HepG2 (cell line): ENCODE measurements at regions of chr5 and their contacts with region 1.

Region 1: GRCh38 chr5:132746954-132747615 is at the start of gene CCNI2:
- DNase-seq: no peak
- ATAC-seq: no peak
- H3K4me3 ChIP-seq: no peak within 1 kb of the TSS
- H3K27ac ChIP-seq: no peak within 1 kb of the TSS
- H3K4me1 ChIP-seq: no peaks in the 10 kb centered on the region; the same call in 1 of the 2 replicates
- H3K27me3 ChIP-seq: no peaks in the 10 kb centered on the region
- CTCF ChIP-seq: peak; percentile 38
- EP300 ChIP-seq: no peak
- POLR2A ChIP-seq: no peak
- RAD21 ChIP-seq: no peak
- total RNA-seq, gene CCNI2: not detected in 2 replicates

Region 2: DNA sequence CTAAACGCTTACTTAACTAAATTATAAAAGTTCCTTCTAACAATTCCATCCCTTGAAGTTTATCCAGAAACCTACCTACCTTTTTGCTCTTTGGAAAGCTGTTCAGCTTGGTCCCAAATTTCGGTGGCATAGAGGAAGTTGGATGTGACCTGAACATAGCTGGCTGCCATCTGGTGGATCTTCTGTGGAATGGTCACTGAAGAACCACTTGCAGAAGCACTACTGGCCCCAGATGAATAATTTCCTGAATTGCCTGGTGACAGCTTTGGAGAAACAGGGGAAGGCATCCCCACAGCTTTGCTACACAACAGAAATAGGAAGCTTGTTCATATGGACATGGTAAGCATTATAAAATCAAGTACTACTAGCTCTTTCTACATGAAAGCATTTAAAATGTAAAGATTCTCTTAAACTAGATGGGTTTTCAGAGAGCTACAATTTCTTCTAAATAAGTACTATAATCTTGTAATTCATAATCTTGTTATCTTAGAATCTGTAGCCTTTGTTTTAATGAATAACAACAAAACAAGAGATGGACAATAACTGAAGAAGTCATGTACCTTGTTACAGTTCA is 136.3 kb after region 1 on chr5:
- CTCF ChIA-PET with region 1: no interaction called
- POLR2A ChIA-PET with region 1: no interaction called
- in situ Hi-C with region 1: loop called (anchors 10 kb)
- intact Hi-C with region 1: no loop called
- DNase-seq: peak; percentile 78
- ATAC-seq: peak; percentile 94
- H3K4me3 ChIP-seq: no peak overlapping the region
- H3K27ac ChIP-seq: peak overlapping the region; percentile 16
- H3K4me1 ChIP-seq: peaks cover 17% of the 10 kb centered on the region
- H3K27me3 ChIP-seq: no peaks in the 10 kb centered on the region
- CTCF ChIP-seq: peak; percentile 85
- EP300 ChIP-seq: no peak
- POLR2A ChIP-seq: no peak
- RAD21 ChIP-seq: peak; percentile 81